RWPE1 (cell line): ENCODE measurements at regions of chr7 and their contacts with region 1.

Region 1: GRCh38 chr7:45157653-45158401 is at the start of gene RAMP3:
- DNase-seq: no peak
- H3K27ac ChIP-seq: no peak within 1 kb of the TSS
- CTCF ChIP-seq: no peak

Region 2: DNA sequence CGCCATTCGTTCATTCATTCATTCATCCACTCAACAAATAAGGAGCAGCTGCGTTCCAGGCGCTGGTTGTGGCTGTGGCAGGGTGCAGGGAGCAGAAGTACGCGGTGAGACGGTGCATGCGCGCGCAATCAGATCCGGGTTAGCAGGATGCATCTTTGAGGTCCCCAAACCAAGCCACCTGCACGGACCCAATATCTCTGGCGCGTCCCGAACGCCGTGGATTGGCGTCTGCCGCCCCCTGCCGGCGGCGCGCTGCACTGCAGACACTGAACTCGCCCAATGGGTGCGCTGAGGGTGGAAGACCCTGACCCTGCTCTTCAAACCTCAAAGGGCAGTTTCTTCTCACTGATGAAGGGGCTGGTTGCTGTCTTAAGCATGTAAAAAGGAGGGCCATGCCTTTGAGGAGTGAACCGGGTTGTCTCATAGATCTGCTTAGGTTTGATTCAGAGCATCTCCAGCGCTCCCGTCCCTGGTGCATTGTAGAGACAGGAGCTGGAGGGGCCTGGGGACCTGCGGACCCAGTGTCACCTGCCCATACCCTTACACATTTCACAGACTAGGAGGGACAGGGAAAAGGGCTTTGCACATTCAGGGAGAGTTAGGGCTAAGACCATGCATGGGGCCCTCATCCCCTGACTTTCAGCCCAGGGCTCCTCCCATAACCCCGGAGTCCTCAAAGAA is 102.3 kb after region 1 on chr7:
- CTCF ChIA-PET with region 1: interaction called, 24 read pairs
- POLR2A ChIA-PET with region 1: no interaction called
- DNase-seq: peak; percentile 58
- H3K27ac ChIP-seq: no peak overlapping the region
- CTCF ChIP-seq: peak; percentile 99